Dorsolateral prefrontal cortex (tissue), 120 donors: ENCODE measurements at regions of chr3 and their contacts with region 1.

Region 1: DNA sequence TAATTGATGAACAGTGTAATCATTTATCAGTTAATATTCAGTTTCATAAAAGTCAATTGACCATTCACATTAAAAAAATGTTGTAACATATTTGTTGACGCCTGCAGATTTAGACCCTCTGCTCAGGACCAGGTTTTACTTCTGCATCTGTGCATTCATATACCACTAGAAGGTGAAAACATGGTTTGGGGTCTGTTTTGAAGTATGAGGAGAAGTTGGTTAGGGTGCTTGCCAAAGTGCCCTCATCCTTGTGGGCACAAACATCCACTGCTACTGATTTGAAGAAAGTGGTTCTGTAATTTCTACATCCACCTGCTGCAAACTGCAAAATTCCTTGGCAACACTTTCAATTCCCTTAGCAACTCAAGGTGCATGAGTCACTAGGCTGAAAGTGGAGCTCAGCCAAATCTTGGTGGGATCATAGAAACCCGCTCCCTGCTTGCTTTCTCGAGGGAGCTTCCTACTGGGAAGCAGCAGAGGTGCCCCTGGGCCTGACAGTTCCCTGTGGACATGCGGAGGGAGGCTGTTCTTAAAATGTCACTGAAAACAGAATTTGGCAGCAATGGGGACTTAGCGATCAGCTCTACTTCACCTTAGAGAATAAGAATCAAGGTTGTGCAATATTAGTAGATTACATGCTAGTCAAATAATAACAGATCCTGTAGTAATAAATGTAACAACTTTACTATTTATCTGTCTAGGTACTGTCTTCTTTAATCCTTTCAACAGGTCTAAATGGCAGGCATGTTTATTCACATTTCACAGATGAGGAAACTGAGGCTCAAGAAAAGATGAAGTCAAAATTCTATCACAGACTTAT is 301.0 kb upstream of the TBL1XR1 start:
- DNase-seq: peak in 1 of 10 donors; percentile 11
- H3K4me3 ChIP-seq: no peak overlapping the region
- H3K27ac ChIP-seq: no peak overlapping the region
- H3K27me3 ChIP-seq: no peaks in the 10 kb centered on the region
- CTCF ChIP-seq: no peak

Region 2: GRCh38 chr3:176310641-176311040 is 1187.6 kb before region 1 on chr3:
- intact Hi-C with region 1: no loop called
- DNase-seq: no peak
- H3K4me3 ChIP-seq: no peak overlapping the region
- H3K27ac ChIP-seq: no peak overlapping the region
- H3K27me3 ChIP-seq: no peaks in the 10 kb centered on the region
- CTCF ChIP-seq: no peak

Region 3: DNA sequence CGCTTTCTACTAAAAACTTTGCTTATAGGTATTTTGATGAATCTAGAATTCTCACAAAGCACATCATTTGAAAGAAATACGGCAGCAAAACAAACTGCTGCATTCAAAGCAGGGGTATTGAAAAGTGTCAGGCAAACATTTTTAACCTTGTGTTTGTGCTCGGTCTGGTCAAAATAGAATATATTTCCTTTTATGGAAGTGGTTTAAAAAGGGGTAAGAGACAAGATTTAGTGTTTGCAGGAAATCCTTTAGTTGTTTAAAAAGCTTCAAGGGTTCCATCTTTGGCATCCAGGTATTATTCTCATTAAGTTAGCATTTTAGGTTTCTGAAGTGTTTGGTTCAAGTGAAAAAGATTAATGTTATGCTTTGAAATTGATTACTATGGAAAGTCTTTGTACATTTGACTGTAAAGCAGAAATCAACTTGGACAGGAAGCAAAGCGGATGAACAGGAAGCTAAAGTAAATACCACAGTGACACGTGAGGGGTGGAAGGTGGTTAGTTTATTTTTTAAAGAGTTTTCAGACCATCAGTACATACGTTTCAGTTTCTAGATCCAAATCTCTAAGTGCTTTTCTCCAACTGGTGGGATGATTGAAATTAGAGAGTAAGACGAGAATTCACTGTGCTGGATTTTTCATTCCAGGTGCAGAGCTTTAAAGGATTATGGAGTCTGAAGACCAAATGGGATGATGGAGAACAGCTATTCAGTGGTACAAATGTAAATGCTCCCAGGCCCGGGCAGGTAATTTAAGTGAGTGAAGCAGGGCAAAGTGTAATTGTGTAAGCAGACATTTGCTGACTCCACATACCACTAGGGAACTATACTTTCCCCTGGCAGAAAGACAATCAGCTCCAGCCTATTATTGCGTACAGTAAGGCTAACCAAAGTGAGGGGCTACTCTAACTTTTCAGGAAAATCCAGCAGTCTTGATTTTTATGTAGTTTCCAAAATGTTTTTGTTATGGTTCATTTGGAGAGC is 40.8 kb after region 1 on chr3:
- intact Hi-C with region 1: loop called in 1 of 2 experiments (anchors 5 kb)
- DNase-seq: no peak
- H3K4me3 ChIP-seq: no peak overlapping the region
- H3K27ac ChIP-seq: peak overlapping the region in 53 of 59 donors; percentile 8 to 85 (median 68)
- H3K27me3 ChIP-seq: no peaks in the 10 kb centered on the region
- CTCF ChIP-seq: no peak